GM12878 (cell line): ENCODE measurements at regions of chr12 and their contacts with region 1.

Region 1: DNA sequence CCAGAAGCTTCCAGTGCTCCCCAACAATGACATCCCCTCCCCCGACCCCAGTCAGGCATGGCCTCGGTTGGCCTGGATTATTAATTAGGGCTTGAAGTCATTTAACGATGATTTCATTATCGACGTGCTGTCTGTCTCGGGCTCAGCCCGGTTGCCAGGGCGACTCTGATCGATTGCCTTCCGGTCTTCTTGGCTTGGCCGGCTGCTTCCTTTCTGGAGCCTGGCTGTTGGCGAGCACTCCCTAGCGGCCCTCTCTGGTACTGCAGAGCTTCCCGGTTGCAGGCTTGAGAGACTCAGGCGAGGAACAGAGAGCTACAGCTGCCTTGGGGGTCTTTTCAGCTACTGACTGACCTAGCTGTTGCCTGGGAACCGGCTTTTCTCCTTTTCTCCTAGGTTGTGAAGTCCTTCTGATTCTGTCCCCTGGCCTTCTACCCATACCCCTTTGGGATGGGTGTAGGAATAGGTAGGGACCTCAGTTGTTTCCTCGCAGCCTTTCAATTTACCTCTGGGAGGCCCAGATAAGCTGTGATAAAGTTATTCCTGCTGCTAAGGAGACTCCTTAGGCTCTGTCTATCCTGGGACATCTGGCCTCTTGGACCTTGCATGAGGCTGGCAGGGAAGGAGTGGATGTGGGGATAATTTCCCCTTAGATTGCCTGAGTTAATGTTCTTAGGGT is 5.5 kb upstream of the CISTR start:
- DNase-seq: no peak
- ATAC-seq: peak; percentile 74
- H3K4me3 ChIP-seq: peak overlapping the region; percentile 54
- H3K27ac ChIP-seq: peak overlapping the region; percentile 48
- H3K4me1 ChIP-seq: peaks cover 51% of the 10 kb centered on the region
- H3K27me3 ChIP-seq: peaks cover 0 to 5% of the 10 kb centered on the region in 2 experiments; a peak in 1 of 4 replicates
- CTCF ChIP-seq: peak; percentile 96 to 99 (median 98); a peak in 5 of 6 replicates
- EP300 ChIP-seq: no peak
- POLR2A ChIP-seq: no peak
- RAD21 ChIP-seq: peak; percentile 67

Region 2: GRCh38 chr12:52645120-52645761 is 1112.0 kb before region 1 on chr12:
- CTCF ChIA-PET with region 1: no interaction called
- POLR2A ChIA-PET with region 1: no interaction called
- RAD21 ChIA-PET with region 1: no interaction called
- SMC1A ChIA-PET with region 1: no interaction called
- in situ Hi-C with region 1: no loop called
- intact Hi-C with region 1: no loop called
- DNase-seq: no peak
- ATAC-seq: no peak
- H3K4me3 ChIP-seq: no peak overlapping the region
- H3K27ac ChIP-seq: no peak overlapping the region
- H3K4me1 ChIP-seq: no peaks in the 10 kb centered on the region
- H3K27me3 ChIP-seq: peaks cover 2 to 3% of the 10 kb centered on the region in 2 experiments; a peak in 2 of 4 replicates
- CTCF ChIP-seq: no peak
- EP300 ChIP-seq: no peak
- POLR2A ChIP-seq: no peak
- RAD21 ChIP-seq: no peak

Region 3: DNA sequence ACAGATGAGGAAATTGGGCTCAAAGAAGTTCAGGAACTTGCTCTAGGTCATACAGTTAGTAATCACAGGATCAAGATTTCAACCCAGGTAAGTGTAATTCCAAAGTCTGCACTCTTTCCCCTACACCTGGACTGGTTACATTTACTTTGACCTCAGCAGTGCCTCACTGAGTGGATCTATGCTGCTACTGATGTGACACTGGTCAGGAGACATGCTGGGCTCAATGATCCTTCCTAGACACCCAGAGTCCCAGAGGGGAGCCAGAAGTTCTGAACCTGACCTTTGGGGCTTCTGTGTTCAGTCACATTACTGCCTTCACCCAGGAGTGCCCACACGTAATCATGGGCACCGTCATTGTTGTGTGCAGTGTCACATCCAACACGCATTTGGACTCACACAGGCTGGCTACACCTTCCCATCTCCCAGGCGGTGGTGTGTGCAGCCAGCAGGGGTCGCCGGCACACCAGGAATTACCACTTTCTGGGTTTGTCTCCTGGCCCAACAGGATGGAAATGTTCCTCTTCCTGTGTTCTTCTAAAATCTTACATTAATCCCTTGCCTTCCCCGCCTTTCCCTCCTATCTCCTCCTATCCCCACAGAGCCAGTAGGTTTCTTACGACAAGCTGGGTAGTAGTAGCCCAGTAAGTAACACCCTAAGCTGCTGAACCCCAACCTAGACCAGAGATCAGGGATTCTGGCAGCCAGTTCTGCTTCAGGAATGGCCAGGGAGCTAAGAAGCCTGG is 55.5 kb before region 1 on chr12:
- CTCF ChIA-PET with region 1: interaction called, 32 read pairs
- POLR2A ChIA-PET with region 1: interaction called, 3 read pairs
- RAD21 ChIA-PET with region 1: interaction called, 12 read pairs
- SMC1A ChIA-PET with region 1: interaction called, 20 read pairs
- in situ Hi-C with region 1: no loop called
- intact Hi-C with region 1: no loop called
- DNase-seq: peak; percentile 20
- ATAC-seq: peak; percentile 99
- H3K4me3 ChIP-seq: no peak overlapping the region
- H3K27ac ChIP-seq: no peak overlapping the region
- H3K4me1 ChIP-seq: no peaks in the 10 kb centered on the region
- H3K27me3 ChIP-seq: peaks cover 8 to 29% of the 10 kb centered on the region in 2 experiments
- CTCF ChIP-seq: peak; percentile 96 to 99 (median 98); a peak in 5 of 6 replicates
- EP300 ChIP-seq: no peak
- POLR2A ChIP-seq: no peak
- RAD21 ChIP-seq: peak; percentile 92

Region 4: GRCh38 chr12:53709671-53710070 is 47.6 kb before region 1 on chr12:
- CTCF ChIA-PET with region 1: interaction called, 11 read pairs
- POLR2A ChIA-PET with region 1: interaction called, 9 read pairs
- RAD21 ChIA-PET with region 1: interaction called, 5 read pairs
- SMC1A ChIA-PET with region 1: interaction called, 3 read pairs
- in situ Hi-C with region 1: no loop called
- intact Hi-C with region 1: no loop called
- DNase-seq: no peak
- ATAC-seq: no peak
- H3K4me3 ChIP-seq: no peak overlapping the region
- H3K27ac ChIP-seq: no peak overlapping the region
- H3K4me1 ChIP-seq: no peaks in the 10 kb centered on the region
- H3K27me3 ChIP-seq: peaks cover 0 to 6% of the 10 kb centered on the region in 2 experiments; a peak in 1 of 4 replicates
- CTCF ChIP-seq: no peak
- EP300 ChIP-seq: no peak
- POLR2A ChIP-seq: no peak
- RAD21 ChIP-seq: no peak

Region 5: DNA sequence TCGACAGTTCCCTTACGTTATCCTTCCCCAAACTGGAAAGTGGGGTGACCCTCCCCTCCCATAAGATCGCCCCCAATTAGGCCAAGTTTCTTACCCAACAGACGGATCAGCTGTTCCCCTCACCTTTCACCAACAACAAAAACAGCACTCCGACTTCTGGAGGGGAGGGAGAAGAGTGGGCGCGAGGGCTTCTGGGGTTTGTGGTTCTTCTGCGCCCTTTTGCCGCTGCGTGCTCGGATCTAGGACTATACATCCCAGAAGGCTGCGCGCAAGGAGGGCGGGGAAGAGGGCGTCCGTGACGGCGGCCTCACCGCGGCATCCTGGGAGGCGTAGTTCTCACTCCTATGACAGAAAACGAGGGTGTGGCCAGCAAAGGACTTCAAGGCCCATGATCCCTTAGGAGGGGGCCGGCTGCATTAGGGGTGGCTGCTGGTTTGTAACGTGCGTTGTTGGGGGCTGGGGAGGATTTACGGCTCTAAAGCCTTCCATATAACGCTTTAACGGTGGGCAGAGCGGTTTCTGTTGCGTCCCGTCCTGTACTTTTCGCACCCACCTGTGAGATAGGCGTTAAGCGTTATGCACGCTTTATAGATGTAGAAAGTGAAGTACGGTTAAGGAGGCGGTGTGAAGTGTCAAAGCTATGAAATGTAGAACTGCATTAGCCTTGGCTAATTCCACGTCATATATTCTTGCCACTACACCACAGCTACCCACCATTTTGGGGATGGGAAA is 29.8 kb before region 1 on chr12 and contains the start of gene CALCOCO1:
- CTCF ChIA-PET with region 1: interaction called, 38 read pairs
- POLR2A ChIA-PET with region 1: interaction called, 8 read pairs
- RAD21 ChIA-PET with region 1: interaction called, 5 read pairs
- SMC1A ChIA-PET with region 1: interaction called, 16 read pairs
- in situ Hi-C with region 1: no loop called
- intact Hi-C with region 1: no loop called
- DNase-seq: peak; percentile 95
- ATAC-seq: peak; percentile 99
- H3K4me3 ChIP-seq: peak within 1 kb of the TSS; percentile 74
- H3K27ac ChIP-seq: 0 out of 2 replicates have a peak within 1 kb of the TSS, but pooled peaks have one; percentile 24
- H3K4me1 ChIP-seq: peaks cover 17% of the 10 kb centered on the region
- H3K27me3 ChIP-seq: no peaks in the 10 kb centered on the region; a peak in 1 of 4 replicates
- CTCF ChIP-seq: no peak
- EP300 ChIP-seq: no peak; a peak in 2 of 4 replicates
- POLR2A ChIP-seq: peak; percentile 68
- RAD21 ChIP-seq: no peak
- polyA plus RNA-seq, gene CALCOCO1: 2.8 to 4.4 TPM

Region 6: GRCh38 chr12:53770281-53770680 is 13.0 kb after region 1 on chr12:
- CTCF ChIA-PET with region 1: interaction called, 34 read pairs
- POLR2A ChIA-PET with region 1: interaction called, 4 read pairs
- RAD21 ChIA-PET with region 1: interaction called, 7 read pairs
- SMC1A ChIA-PET with region 1: interaction called, 5 read pairs
- in situ Hi-C with region 1: no loop called
- intact Hi-C with region 1: no loop called
- DNase-seq: no peak
- ATAC-seq: no peak
- H3K4me3 ChIP-seq: no peak overlapping the region
- H3K27ac ChIP-seq: no peak overlapping the region
- H3K4me1 ChIP-seq: no peaks in the 10 kb centered on the region
- H3K27me3 ChIP-seq: no peaks in the 10 kb centered on the region
- CTCF ChIP-seq: no peak
- EP300 ChIP-seq: no peak
- POLR2A ChIP-seq: no peak
- RAD21 ChIP-seq: no peak

Region 7: DNA sequence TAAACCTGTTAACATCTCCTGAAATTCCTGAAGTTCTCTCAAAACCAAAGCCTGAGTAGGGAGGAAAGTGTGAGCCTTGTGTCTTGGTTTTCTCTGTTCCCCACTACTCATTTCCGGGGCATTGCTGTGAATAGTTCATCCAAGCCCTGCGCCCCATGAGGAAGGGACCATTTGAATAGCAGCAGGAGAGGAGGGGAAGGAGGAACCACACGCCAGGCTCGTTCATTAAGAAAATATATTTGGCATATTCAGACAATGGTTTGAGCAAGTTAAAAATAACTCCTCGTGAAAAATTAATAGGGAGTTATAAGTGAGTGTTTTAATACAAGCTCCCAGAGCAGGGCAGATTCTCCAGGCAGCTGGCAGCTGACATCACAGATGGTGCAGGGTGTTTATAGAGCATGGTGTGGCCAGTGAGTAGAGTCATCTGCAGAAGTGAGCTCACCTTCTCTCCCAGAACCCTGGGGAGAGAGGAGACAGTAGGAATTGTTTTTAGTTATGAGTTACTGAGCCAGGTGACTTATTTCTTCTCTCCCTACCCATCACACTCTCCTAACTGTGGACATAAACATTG is 24.1 kb after region 1 on chr12:
- CTCF ChIA-PET with region 1: interaction called, 16 read pairs
- POLR2A ChIA-PET with region 1: no interaction called
- RAD21 ChIA-PET with region 1: interaction called, 3 read pairs
- SMC1A ChIA-PET with region 1: interaction called, 4 read pairs
- in situ Hi-C with region 1: no loop called
- intact Hi-C with region 1: no loop called
- DNase-seq: no peak
- ATAC-seq: no peak
- H3K4me3 ChIP-seq: no peak overlapping the region
- H3K27ac ChIP-seq: no peak overlapping the region
- H3K4me1 ChIP-seq: no peaks in the 10 kb centered on the region
- H3K27me3 ChIP-seq: no peaks in the 10 kb centered on the region; a peak in 1 of 4 replicates
- CTCF ChIP-seq: no peak
- EP300 ChIP-seq: no peak
- POLR2A ChIP-seq: no peak
- RAD21 ChIP-seq: no peak

Region 8: DNA sequence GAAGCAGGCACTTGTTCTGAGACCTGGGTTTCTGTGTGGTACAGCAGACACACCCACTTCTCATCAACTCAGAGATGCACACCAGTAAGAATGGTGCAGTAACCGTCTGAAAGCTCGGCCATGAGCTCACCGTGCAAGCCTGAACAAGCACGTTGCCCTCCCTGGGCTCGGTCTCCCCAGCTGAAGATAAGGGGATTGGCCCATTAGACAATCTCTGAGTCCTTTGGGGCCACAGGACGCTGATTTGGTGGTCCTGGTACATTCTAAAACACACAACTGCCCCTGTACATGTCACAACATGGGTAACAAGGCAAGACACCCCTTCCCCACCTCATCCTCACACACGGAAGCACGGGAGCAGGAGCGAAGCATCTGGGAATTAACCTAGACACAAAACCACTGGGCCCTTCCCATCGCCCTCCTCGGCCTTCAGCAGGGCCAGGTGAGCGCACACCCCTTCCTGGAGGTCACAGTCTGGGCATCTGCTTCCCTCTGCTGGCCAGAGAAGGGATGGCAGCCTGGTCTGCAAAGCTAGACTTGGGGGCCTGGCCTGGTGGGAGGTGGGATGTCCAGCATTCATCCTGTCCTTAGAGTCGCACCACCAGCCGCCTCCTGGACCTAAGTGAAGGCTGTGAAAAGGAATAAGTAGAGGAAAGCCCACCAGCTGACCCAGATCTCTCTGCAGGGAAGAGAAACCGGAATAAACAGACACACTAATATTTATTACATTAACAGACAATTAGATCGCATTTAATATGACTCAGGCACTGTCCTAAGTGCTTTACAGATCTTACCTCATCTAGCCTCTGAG is 450.5 kb after region 1 on chr12:
- CTCF ChIA-PET with region 1: interaction called, 14 read pairs
- POLR2A ChIA-PET with region 1: no interaction called
- RAD21 ChIA-PET with region 1: no interaction called
- SMC1A ChIA-PET with region 1: interaction called, 3 read pairs
- in situ Hi-C with region 1: no loop called
- intact Hi-C with region 1: loop called (anchors 10 kb)
- DNase-seq: no peak
- ATAC-seq: peak; percentile 98
- H3K4me3 ChIP-seq: no peak overlapping the region
- H3K27ac ChIP-seq: no peak overlapping the region
- H3K4me1 ChIP-seq: no peaks in the 10 kb centered on the region
- H3K27me3 ChIP-seq: peaks cover 0 to 2% of the 10 kb centered on the region in 2 experiments; a peak in 3 of 4 replicates
- CTCF ChIP-seq: peak; percentile 93 to 97 (median 97)
- EP300 ChIP-seq: no peak
- POLR2A ChIP-seq: no peak
- RAD21 ChIP-seq: peak; percentile 87